Activated CD4-positive, alpha-beta T cell treated with anti-CD3 and anti-CD28 coated beads, Interleukin-2, amount 10 ng/mL, durations not matched to agents 24 days and 14 days (primary cell): ENCODE measurements at regions of chr2 and their contacts with region 1.

Region 1: GRCh38 chr2:16608661-16609643 is 56.7 kb downstream of the CYRIA start:
- DNase-seq: peak; percentile 97
- H3K4me3 Mint-ChIP-seq: peak overlapping the region; percentile 87
- H3K27ac Mint-ChIP-seq: peak overlapping the region; percentile 67
- H3K4me1 Mint-ChIP-seq: peaks cover 4% of the 10 kb centered on the region
- H3K27me3 Mint-ChIP-seq: no peaks in the 10 kb centered on the region

Region 2: DNA sequence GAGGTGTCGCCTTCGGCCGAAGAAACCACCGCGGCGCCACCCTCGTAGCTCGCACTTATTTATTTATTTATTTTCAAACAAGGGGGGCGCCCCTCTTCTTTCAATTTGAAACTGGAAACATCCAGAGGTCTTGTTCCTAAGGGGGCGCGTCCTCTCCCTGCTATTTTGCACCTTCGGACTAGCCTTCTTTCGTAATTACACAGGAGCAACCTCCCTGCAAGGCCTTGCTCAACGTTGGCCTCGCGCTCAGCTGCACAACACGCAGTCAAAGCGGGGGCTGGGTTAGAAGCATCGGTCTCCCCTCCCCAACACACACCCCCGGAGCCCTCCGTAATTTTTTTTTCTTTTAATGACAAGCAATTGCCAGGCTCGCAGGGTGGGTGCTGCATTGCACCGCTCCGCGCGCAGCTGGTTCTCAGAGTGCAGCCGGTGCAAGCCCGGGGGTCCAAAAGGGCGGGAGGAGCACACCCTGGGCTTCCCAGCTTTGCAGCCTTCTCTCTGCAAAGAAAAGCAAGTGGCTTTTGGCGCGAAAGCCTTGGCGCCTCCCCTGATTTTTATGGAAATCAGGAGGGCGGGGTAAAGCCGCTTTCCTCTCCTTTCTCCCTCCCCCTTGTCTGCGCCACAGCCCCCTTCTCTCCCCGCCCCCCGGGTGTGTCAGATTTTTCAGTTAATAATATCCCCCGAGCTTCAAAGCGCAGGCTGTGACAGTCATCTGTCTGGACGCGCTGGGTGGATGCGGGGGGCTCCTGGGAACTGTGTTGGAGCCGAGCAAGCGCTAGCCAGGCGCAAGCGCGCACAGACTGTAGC is 668.9 kb before region 1 on chr2 and contains the start of gene MYCN:
- intact Hi-C with region 1: loop called (anchors 1 kb)
- DNase-seq: peak; percentile 56
- H3K4me3 Mint-ChIP-seq: peak within 1 kb of the TSS; percentile 58
- H3K27ac Mint-ChIP-seq: no peak within 1 kb of the TSS
- H3K4me1 Mint-ChIP-seq: peaks cover 2% of the 10 kb centered on the region
- H3K27me3 Mint-ChIP-seq: peaks cover 65% of the 10 kb centered on the region
- total RNA-seq, gene MYCN: 0.12 TPM in 1 of 2 replicates, not detected in the other

Region 3: GRCh38 chr2:16525265-16525887 is 83.6 kb before region 1 on chr2:
- intact Hi-C with region 1: loop called (anchors 1 kb)
- DNase-seq: peak; percentile 73
- H3K4me3 Mint-ChIP-seq: no peak overlapping the region
- H3K27ac Mint-ChIP-seq: no peak overlapping the region
- H3K4me1 Mint-ChIP-seq: no peaks in the 10 kb centered on the region
- H3K27me3 Mint-ChIP-seq: peaks cover 5% of the 10 kb centered on the region

Region 4: DNA sequence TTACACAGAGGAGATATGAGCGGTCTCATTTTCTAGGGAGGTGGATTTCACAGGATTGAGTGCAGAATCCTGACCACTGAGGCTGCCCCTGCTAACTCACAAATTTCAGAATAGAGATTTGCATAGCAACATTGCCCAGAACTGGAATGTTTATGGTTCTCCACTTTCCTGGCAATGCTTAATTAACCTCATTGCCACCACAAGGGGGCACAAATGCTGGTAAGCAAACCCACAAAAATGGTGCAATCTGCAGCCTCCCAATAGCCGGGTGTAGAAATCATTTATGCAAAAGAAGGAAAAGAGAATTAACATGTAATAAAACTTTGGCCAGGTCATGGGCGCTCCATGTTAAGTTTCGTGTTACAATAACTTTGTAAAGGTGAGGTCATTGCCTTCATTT is 55.7 kb before region 1 on chr2:
- intact Hi-C with region 1: loop called (anchors 1 kb)
- DNase-seq: peak; percentile 71
- H3K4me3 Mint-ChIP-seq: no peak overlapping the region
- H3K27ac Mint-ChIP-seq: no peak overlapping the region
- H3K4me1 Mint-ChIP-seq: no peaks in the 10 kb centered on the region
- H3K27me3 Mint-ChIP-seq: no peaks in the 10 kb centered on the region

Region 5: DNA sequence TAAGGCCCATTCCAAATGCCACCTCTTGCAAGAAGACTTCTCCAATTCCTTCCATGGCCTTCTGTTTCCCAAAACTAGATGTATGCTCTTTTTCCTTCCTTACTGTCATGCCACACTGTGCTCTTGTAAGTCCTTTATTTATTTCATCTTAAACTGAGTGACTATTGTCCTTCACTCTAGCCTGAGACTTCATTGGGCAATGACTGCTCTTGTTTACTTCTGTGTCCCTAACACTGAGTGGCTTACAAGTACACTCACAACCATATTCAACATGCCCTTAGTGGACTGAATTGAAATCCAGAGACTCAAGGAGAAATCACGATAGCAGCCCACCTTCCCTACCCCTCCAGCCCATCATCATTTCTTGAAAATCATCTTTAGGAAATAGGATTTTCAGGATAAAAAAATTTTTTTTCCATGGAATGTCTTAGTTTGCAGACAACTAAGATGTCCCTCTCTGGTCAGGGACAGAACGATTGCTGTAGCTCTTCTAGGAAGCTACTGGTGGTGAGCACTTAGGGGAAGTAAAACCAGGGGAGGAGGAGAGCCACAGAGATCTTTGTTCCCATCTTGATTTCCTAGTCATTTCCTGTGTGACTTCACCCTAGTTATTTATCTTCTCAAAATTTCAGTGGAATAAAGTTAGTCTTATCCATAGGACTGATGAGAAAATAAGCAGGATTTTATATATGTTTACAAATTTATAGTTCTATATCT is 24.0 kb before region 1 on chr2:
- intact Hi-C with region 1: no loop called
- DNase-seq: no peak
- H3K4me3 Mint-ChIP-seq: no peak overlapping the region
- H3K27ac Mint-ChIP-seq: no peak overlapping the region
- H3K4me1 Mint-ChIP-seq: no peaks in the 10 kb centered on the region
- H3K27me3 Mint-ChIP-seq: no peaks in the 10 kb centered on the region

Region 6: GRCh38 chr2:16635791-16636699 is 27.1 kb after region 1 on chr2:
- intact Hi-C with region 1: no loop called
- DNase-seq: no peak
- H3K4me3 Mint-ChIP-seq: no peak overlapping the region
- H3K27ac Mint-ChIP-seq: no peak overlapping the region
- H3K4me1 Mint-ChIP-seq: peaks cover 23% of the 10 kb centered on the region
- H3K27me3 Mint-ChIP-seq: peaks cover 2% of the 10 kb centered on the region